RWPE1 (cell line): ENCODE measurements at regions of chr12 and their contacts with region 1.

Region 1: DNA sequence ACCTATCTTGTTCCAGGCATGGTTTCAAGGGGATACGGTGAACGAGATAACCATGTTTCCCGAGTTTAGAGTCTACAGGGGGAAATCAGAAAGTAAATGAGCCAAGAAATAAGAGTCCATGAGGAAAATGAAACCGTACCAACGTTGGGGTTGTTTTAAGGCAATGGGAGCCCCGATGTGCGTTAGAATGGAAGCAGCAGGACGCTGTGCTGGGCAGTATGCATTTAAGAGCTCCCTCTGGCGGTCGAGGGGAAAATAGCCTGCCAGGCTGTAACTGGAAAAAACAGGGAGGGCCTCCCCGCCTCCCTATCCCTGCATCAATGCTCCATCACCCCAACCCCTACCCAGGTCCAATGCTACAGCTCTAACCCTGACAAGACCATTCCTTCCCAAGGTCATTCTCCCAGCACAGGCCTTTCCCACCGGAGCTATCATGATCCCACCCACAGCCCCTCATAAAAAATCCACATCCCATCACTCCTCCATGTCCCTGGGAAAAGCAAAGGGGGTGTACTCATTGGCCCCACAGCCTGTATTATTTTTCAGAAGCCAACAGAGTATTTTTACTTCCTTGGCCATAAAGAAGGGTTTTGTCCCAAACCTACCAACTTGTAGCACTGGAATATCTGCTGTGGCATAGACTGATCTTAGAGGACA is 226.3 kb upstream of the NOS1 start:
- DNase-seq: peak; percentile 65
- H3K27ac ChIP-seq: no peak overlapping the region
- CTCF ChIP-seq: peak; percentile 82

Region 2: GRCh38 chr12:117236456-117237001 is 351.2 kb before region 1 on chr12:
- CTCF ChIA-PET with region 1: interaction called, 12 read pairs
- POLR2A ChIA-PET with region 1: no interaction called
- DNase-seq: peak; percentile 40
- H3K27ac ChIP-seq: no peak overlapping the region
- CTCF ChIP-seq: peak; percentile 62

Region 3: GRCh38 chr12:117367011-117367638 is 220.6 kb before region 1 on chr12:
- CTCF ChIA-PET with region 1: interaction called, 40 read pairs
- POLR2A ChIA-PET with region 1: no interaction called
- DNase-seq: peak; percentile 76
- H3K27ac ChIP-seq: no peak overlapping the region
- CTCF ChIP-seq: peak; percentile 91